Activated CD8-positive, alpha-beta T cell treated with anti-CD3 and anti-CD28 coated beads for 36 hours (primary cell): ENCODE measurements at regions of chr12 and their contacts with region 1.

Region 1: DNA sequence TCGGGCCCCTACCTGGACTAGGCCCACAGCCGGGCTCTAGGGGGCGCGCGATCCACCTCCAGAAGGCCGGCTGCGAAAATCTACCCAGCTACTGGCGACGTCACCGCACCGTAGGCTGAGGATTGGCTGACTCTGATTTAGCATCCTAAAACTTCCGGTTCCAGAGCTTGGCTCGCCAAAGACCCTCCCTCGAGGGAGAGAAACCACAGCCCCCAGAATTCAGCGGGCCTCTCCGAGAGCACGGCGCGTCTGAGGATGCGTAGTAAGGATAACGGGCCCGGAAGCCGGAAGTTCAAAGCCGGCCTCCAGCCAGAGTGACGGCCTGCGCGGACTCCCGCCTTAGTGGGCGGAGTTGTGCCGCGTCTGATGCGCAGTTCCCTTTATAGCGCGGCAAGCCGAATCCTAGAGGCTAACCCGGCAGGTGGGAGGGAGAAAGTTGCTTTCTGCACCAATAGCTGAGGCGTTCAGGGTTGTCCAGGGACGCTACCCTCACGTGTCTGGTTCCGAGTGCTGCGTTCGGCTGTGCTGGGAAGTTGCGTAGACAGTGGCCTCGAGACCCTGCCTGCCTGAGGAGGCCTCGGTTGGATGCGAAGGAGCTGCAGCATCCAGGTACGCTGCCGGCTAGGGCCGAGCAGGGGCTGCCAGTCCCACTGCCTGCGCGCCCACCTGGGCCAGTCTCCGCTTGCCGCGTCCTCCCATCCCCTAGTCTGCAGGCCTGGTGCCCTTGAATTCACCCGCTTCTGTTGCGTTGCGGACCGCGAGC is at the start of gene COX14:
- DNase-seq: peak; percentile 100
- ATAC-seq: peak; percentile 88
- H3K4me3 Mint-ChIP-seq: peak within 1 kb of the TSS; percentile 95
- H3K27ac Mint-ChIP-seq: peak within 1 kb of the TSS; percentile 94
- H3K4me1 Mint-ChIP-seq: peaks cover 34% of the 10 kb centered on the region
- H3K27me3 Mint-ChIP-seq: no peaks in the 10 kb centered on the region
- CTCF ChIP-seq: peak; percentile 84
- total RNA-seq, gene COX14: 43.1 to 51.0 TPM

Region 2: DNA sequence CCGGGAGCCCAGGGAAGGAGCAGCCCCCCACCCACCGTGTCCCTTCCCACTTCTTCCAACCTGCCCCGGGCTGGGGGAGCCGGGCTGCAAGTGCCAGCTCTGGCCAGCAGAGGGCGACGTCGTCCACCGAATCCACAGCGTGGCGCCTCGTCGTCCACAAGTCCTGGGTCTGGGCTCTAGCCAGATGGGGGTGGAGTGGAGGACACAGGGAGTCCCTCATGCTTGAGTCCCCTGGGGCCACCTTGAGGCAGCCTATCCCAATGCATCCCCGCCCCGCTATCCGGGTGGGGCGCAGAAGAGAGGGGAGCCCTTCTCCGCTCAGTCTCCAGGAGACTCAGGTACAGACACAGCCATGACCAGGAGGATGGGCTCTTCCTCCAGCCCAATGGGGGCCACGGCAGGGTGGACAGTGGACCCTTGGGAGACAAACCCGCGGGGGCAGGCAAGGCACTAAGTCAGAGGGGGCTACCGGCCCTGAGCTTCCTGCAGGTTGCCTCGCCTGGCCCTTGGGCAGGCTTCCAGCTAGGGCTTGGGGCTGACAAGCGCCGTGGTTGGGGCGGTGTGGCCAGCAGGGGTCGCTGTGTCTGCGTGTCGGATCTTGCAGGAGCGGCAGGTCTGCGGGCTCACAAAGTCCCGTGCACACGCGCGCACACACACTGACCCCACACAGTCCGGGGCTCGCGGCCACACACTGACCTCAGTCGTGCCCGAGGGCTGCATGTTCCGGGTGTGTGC is 144.7 kb before region 1 on chr12:
- CTCF ChIA-PET with region 1: interaction called, 11 read pairs
- POLR2A ChIA-PET with region 1: no interaction called
- intact Hi-C with region 1: no loop called
- DNase-seq: peak; percentile 96
- ATAC-seq: peak; percentile 89
- H3K4me3 Mint-ChIP-seq: peak overlapping the region; percentile 61
- H3K27ac Mint-ChIP-seq: no peak overlapping the region
- H3K4me1 Mint-ChIP-seq: no peaks in the 10 kb centered on the region
- H3K27me3 Mint-ChIP-seq: peaks cover 24% of the 10 kb centered on the region
- CTCF ChIP-seq: peak; percentile 92

Region 3: DNA sequence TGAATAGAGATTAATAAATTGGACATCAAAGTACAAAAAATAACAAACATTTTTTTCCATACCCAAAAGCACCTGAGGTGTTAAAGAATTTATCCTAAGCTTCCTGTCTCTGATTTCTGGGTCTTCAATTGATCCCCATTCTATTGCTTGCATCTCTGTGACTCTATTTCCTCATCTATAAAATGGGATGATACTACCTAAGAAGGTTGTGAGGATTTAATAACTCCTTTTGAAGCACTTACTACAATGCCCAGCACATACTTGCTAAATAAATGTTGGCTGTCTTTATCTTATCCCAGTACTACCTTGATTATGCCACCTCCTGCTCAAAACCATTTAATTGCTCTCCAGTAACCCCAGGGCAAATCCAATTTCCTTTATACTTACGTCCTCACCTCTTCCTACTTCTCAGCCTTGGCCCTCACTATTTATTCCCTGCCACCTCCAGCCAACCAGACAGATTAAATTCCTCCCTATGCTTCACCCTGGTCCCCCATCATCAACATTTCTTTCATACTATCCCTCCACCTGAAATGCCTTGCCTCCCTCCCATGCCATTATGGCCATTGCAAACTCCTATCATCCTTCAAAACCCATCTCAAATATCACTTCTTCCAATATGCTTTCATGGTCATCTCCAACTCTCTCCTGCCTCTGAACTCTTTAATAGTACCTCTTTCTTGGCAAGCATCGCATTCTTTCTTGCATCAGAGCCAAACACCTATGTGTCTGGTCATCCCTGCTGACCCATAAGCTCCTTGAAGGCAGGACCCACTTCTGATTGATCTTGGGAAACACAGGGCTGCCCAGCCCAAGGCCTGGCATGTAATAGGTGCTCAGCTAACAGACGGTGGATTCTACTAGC is 62.4 kb before region 1 on chr12:
- CTCF ChIA-PET with region 1: no interaction called
- POLR2A ChIA-PET with region 1: no interaction called
- intact Hi-C with region 1: no loop called
- DNase-seq: no peak
- ATAC-seq: no peak
- H3K4me3 Mint-ChIP-seq: no peak overlapping the region
- H3K27ac Mint-ChIP-seq: no peak overlapping the region
- H3K4me1 Mint-ChIP-seq: no peaks in the 10 kb centered on the region
- H3K27me3 Mint-ChIP-seq: peaks cover 32% of the 10 kb centered on the region
- CTCF ChIP-seq: no peak

Region 4: DNA sequence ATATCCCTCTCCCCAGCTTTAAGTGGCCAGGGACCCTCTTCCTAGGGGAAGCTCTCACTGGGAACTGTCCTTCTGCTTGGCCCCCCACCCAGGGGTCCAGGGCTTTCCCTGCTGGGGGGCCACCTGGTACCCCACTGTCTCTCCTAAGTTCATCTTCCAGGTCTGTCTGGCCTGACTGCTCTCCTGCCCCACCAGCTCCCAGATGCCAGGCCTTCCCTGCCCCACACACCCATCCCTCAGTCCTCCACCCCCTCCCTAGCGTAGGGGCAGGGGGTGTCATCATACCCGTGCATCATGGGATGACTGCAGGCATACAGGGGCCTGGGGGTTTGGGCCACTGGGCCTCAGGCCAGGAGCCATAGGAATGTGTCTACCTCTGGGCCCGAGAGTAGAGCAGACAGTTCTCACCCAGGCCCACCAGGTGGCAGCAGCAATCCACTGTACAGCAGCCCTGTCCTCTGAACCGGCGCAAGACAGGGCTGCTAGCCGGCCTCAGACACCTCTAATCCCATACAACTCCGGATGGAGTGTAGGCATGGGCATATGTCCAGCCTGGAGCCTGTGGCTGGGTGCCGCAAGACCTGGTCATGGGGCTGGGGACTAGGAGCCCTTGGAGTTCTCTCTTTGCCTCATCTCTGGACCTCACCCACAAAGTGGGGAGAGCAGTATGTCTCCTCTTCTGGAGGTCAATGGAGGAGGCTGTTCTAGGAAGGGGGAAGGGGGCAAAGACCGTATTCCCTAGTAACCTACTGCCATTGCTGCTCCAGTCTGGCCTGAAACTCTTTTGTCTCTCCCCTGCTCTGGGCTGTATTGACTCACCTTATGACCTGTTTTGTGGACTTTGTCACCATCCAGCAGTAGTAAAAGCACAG is 36.7 kb before region 1 on chr12:
- CTCF ChIA-PET with region 1: interaction called, 10 read pairs
- POLR2A ChIA-PET with region 1: interaction called, 4 read pairs
- intact Hi-C with region 1: no loop called
- DNase-seq: peak; percentile 86
- ATAC-seq: peak; percentile 99
- H3K4me3 Mint-ChIP-seq: no peak overlapping the region
- H3K27ac Mint-ChIP-seq: no peak overlapping the region
- H3K4me1 Mint-ChIP-seq: peaks cover 4% of the 10 kb centered on the region
- H3K27me3 Mint-ChIP-seq: no peaks in the 10 kb centered on the region
- CTCF ChIP-seq: peak; percentile 91

Region 5: DNA sequence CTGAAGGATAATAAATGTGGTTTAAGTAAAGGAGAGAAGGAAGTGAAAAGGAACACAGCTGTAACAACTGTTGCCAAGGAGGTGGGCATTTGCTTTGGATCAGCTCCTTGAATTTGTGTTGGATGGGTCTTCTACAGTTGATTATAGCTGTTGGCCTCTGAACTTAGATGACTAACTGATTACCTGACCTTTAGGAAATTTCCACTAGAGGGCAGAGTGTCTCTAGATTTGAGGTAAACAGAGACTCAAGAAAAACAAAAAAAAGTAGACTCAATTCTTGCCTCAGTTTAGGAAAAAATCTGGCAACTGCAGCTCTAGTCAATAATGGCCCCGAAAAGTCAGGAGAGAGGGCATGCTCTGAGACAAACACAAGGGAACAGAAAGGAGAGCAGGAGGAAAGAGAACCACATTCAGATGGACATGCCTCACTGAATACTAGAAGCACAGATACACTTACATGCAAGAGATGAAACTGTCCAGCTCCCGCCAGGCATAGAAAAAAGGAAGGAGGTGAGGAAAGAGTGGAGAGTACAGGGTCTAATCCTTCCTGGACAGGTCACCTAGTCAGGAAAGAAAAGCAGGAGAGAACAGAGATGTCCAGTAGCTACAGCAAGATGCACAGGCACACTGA is 20.7 kb after region 1 on chr12:
- CTCF ChIA-PET with region 1: interaction called, 57 read pairs
- POLR2A ChIA-PET with region 1: interaction called, 12 read pairs
- intact Hi-C with region 1: no loop called
- DNase-seq: no peak
- ATAC-seq: peak; percentile 45
- H3K4me3 Mint-ChIP-seq: no peak overlapping the region
- H3K27ac Mint-ChIP-seq: peak overlapping the region; percentile 68
- H3K4me1 Mint-ChIP-seq: peaks cover 4% of the 10 kb centered on the region
- H3K27me3 Mint-ChIP-seq: no peaks in the 10 kb centered on the region
- CTCF ChIP-seq: peak; percentile 39

Region 6: GRCh38 chr12:50162230-50162629 is 50.4 kb after region 1 on chr12:
- CTCF ChIA-PET with region 1: interaction called, 51 read pairs
- POLR2A ChIA-PET with region 1: interaction called, 21 read pairs
- intact Hi-C with region 1: no loop called
- DNase-seq: no peak
- ATAC-seq: no peak
- H3K4me3 Mint-ChIP-seq: no peak overlapping the region
- H3K27ac Mint-ChIP-seq: peak overlapping the region; percentile 13
- H3K4me1 Mint-ChIP-seq: peaks cover 39% of the 10 kb centered on the region
- H3K27me3 Mint-ChIP-seq: no peaks in the 10 kb centered on the region
- CTCF ChIP-seq: no peak

Region 7: DNA sequence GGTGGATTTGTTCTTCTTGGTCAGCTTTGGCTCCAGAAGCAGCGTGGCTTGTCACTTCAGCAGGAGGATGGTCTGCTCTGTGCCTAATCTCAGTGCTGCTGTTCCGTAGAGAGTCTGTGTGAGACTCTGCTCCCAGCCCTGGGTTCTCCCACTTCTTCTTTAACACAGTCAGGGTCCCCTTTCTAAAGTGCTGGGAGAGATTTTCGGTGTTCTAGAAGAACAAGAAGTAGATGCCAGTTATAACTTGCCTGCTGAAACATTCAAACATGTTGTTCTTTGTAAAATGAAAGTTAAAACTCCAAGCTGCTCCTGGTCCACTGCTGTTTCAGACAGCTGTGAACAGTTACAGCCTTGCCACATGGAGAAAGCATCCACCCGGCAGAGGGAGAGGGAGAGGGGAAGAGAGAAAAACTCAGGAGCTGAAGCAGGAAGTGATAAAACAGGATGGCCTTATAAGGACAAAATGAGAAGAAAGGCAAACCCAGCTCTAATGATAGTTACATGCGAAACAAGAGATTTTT is 110.5 kb after region 1 on chr12:
- CTCF ChIA-PET with region 1: interaction called, 13 read pairs
- POLR2A ChIA-PET with region 1: interaction called, 6 read pairs
- intact Hi-C with region 1: no loop called
- DNase-seq: no peak
- ATAC-seq: no peak
- H3K4me3 Mint-ChIP-seq: no peak overlapping the region
- H3K27ac Mint-ChIP-seq: no peak overlapping the region
- H3K4me1 Mint-ChIP-seq: peaks cover 35% of the 10 kb centered on the region
- H3K27me3 Mint-ChIP-seq: no peaks in the 10 kb centered on the region
- CTCF ChIP-seq: no peak

Region 8: DNA sequence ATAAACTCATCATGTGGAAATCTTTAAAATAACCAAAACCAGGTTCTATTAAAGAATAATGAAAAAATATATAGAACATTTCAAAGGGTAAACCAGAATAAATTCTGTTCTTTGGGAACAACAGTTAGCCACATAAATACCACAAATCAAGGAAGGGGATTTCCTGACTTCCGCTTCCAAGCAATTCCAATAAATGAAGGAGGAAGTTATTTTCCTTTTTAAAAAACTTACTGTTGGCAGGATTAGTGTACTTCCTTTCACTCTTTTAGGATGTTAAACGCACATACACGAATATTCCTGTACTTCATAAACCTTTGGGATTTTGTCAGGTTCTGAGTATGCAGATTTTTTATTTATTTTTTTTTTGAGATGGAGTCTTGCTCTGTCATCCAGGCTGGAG is 185.2 kb after region 1 on chr12:
- CTCF ChIA-PET with region 1: no interaction called
- POLR2A ChIA-PET with region 1: no interaction called
- intact Hi-C with region 1: no loop called
- DNase-seq: no peak
- ATAC-seq: no peak
- H3K4me3 Mint-ChIP-seq: no peak overlapping the region
- H3K27ac Mint-ChIP-seq: no peak overlapping the region
- H3K4me1 Mint-ChIP-seq: peaks cover 3% of the 10 kb centered on the region
- H3K27me3 Mint-ChIP-seq: no peaks in the 10 kb centered on the region
- CTCF ChIP-seq: no peak